ENCODE measurements at regions of chr5 and their contacts with region 1.

Region 1: DNA sequence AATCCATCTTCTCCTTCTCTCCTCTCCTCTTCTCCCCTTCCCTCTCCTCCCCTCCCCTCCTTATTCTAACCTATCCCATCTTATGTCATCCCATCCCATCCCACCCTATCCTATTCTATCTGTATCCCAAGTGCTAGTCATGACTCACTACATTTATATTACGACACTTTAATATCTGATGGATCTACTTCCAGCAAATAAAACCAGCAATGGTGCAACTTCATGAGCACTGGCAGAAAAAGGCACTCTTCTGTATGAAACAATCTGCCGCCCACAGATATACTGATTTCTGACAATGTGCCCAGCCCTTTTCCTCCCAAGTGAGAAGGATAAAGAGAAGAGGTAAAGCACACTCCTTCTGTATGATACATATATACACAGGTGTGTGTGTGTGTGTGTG is 86.6 kb upstream of the ANKH start:
- DNase-seq: no peak
- ATAC-seq: no peak
- H3K4me3 ChIP-seq: no peak overlapping the region
- H3K27ac ChIP-seq: no peak overlapping the region
- H3K4me1 ChIP-seq: peaks cover 0 to 13% (median 3%) of the 10 kb centered on the region in 9 donors
- H3K27me3 ChIP-seq: no peaks in the 10 kb centered on the region
- CTCF ChIP-seq: no peak

Region 2: DNA sequence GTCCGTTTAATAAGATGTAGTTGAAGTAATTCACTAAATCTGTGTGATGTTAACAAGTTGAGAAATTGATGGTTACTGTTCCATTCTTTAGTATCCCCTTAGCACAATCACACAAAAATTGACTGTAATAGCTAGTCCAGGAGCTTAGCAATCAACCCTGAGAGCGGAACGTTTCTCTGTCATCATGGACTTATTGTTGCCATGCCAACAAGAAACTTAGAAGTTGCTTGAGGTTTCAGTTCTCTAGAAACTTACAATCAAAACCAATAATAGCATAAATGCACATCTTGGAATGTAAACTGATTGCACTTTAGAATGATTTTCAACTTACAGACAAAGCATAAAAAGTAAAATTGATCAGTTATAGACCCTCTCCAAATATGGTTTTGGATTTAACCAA is 38.8 kb after region 1 on chr5:
- intact Hi-C with region 1: loop called in 3 of 10 experiments (anchors 5 kb)
- DNase-seq: no peak
- ATAC-seq: no peak
- H3K4me3 ChIP-seq: no peak overlapping the region
- H3K27ac ChIP-seq: no peak overlapping the region
- H3K4me1 ChIP-seq: peaks cover 0 to 39% (median 0%) of the 10 kb centered on the region in 9 donors
- H3K27me3 ChIP-seq: no peaks in the 10 kb centered on the region
- CTCF ChIP-seq: no peak